Posterior cingulate gyrus (tissue), 11 donors: ENCODE measurements at regions of chr9 and their contacts with region 1.

Region 1: DNA sequence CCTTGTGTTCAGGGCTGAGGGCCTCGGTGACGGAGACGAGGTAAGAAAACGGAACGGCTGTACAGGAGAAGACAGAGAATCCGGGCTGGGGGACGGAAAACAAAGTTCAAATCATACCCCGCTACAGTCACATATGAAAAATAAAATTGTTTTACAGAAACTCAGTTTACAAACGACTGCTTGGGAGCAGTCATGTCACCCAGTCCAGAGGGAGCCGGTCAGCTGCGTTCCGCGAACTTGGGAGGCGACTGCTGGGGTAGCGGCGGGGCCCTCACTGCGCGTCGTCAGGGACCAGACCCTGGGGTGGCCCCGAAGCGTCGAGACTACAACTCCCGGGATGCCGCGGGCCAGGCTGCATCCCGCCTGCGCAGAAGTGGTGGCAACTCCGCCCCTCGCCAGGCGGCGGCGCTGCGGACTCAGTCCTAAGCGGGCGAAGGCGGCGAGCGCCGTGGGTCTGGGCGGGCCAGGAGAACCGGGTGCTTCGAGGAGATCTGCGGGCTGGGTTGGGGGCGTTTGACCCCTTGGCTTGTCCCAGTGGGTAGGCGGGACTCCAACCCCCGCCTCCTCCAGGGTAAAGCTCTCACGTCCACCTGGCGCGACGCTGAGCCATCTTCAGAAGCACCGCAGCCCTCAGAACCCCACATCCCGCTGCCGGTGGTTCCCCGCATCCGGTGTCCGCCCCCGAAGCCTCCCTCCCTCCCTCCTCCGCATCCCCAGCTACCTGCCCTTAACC is 4.0 kb downstream of the SIT1 start:
- DNase-seq: peak; percentile 86 to 99 (median 92)

Region 2: GRCh38 chr9:35603987-35604577 is 42.6 kb before region 1 on chr9:
- intact Hi-C with region 1: loop called (anchors 2 kb)
- DNase-seq: peak; percentile 98 to 100 (median 99)